Posterior vena cava (tissue), 2 donors: ENCODE measurements at regions of chr2 and their contacts with region 1.

Region 1: DNA sequence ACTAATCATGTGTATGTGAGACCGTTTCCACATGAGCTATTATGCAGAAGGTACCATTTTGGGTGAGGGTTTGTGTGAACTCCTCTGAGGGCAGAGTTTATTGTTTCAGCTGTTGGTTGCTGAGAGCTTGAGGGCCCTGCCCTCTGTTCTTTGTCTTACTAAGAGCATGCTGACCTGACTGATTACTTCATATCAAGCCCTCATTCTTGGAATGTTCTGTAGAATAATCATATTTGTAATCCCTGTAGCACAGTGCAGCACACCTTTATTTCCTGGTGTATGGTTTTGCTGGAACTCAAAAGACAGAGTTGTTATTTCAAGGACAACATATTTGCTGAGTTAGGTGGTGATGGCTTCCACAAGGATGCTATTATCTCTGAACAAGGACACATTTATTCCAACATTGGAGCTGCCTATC is 118.5 kb downstream of the GALNT3 start:
- DNase-seq: no peak

Region 2: GRCh38 chr2:165686800-165687199 is 11.2 kb after region 1 on chr2:
- intact Hi-C with region 1: loop called in 1 of 2 experiments (anchors 1 kb)
- DNase-seq: no peak